ENCODE measurements at regions of chr6 and their contacts with region 1.

Region 1: GRCh38 chr6:111873178-111874024 is at the start of gene FYN:
- DNase-seq: peak; percentile 98
- ATAC-seq: peak; percentile 94
- H3K4me3 ChIP-seq: peak within 1 kb of the TSS; percentile 61 to 89 (median 81)
- H3K4me3 Mint-ChIP-seq: peak within 1 kb of the TSS; percentile 99
- H3K27ac ChIP-seq: peak within 1 kb of the TSS; percentile 66 to 76
- H3K27ac Mint-ChIP-seq: peak within 1 kb of the TSS; percentile 94
- H3K4me1 ChIP-seq: peaks cover 26 to 36% of the 10 kb centered on the region in 2 donors
- H3K4me1 Mint-ChIP-seq: peaks cover 38% of the 10 kb centered on the region
- H3K27me3 ChIP-seq: no peaks in the 10 kb centered on the region
- H3K27me3 Mint-ChIP-seq: no peaks in the 10 kb centered on the region
- CTCF ChIP-seq: no peak
- total RNA-seq, gene FYN: 92.4 and 94.0 TPM in 2 replicates

Region 2: GRCh38 chr6:111259089-111259831 is 614.1 kb before region 1 on chr6:
- CTCF ChIA-PET with region 1: no interaction called
- POLR2A ChIA-PET with region 1: no interaction called
- intact Hi-C with region 1: loop called (anchors 2 kb)
- DNase-seq: peak; percentile 100
- ATAC-seq: peak; percentile 96
- H3K4me3 ChIP-seq: peak overlapping the region; percentile 63 to 91 (median 82)
- H3K4me3 Mint-ChIP-seq: peak overlapping the region; percentile 87
- H3K27ac ChIP-seq: peak overlapping the region; percentile 95
- H3K27ac Mint-ChIP-seq: peak overlapping the region; percentile 98
- H3K4me1 ChIP-seq: peaks cover 17 to 26% of the 10 kb centered on the region in 2 donors
- H3K4me1 Mint-ChIP-seq: peaks cover 25% of the 10 kb centered on the region
- H3K27me3 ChIP-seq: no peaks in the 10 kb centered on the region
- H3K27me3 Mint-ChIP-seq: peaks cover under 1% of the 10 kb centered on the region
- CTCF ChIP-seq: peak; percentile 96

Region 3: DNA sequence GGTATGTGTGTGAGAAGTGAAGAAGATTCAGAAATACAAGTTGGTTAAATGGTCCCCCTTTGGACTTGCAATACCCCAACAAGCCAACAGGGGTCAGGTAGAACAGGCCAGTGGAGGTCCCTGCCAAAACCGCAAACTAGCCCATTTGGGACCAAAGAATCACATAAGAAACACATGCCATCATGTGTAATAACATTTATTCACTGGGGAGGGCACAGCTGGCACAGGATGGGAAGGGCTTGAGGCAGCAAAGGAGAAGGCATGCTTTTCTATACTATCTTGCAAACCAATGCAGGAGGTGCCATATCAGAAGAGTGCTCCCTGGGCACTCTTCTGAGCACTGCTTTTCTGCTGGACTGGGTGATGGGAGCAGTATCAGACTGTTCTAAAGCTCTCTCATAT is 151.6 kb before region 1 on chr6:
- CTCF ChIA-PET with region 1: interaction called, 8 read pairs
- POLR2A ChIA-PET with region 1: no interaction called
- intact Hi-C with region 1: loop called (anchors 1 kb)
- DNase-seq: peak; percentile 54
- ATAC-seq: no peak
- H3K4me3 ChIP-seq: no peak overlapping the region
- H3K4me3 Mint-ChIP-seq: no peak overlapping the region
- H3K27ac ChIP-seq: no peak overlapping the region
- H3K27ac Mint-ChIP-seq: no peak overlapping the region
- H3K4me1 ChIP-seq: peaks cover 37 to 40% of the 10 kb centered on the region in 2 donors
- H3K4me1 Mint-ChIP-seq: peaks cover 41% of the 10 kb centered on the region
- H3K27me3 ChIP-seq: no peaks in the 10 kb centered on the region
- H3K27me3 Mint-ChIP-seq: no peaks in the 10 kb centered on the region
- CTCF ChIP-seq: peak; percentile 70

Region 4: GRCh38 chr6:111804627-111805235 is 68.7 kb before region 1 on chr6:
- CTCF ChIA-PET with region 1: interaction called, 5 read pairs
- POLR2A ChIA-PET with region 1: interaction called, 4 read pairs
- intact Hi-C with region 1: loop called (anchors 1 kb)
- DNase-seq: peak; percentile 26
- ATAC-seq: peak; percentile 62
- H3K4me3 ChIP-seq: no peak overlapping the region
- H3K4me3 Mint-ChIP-seq: peak overlapping the region; percentile 48
- H3K27ac ChIP-seq: no peak overlapping the region
- H3K27ac Mint-ChIP-seq: peak overlapping the region; percentile 70
- H3K4me1 ChIP-seq: peaks cover 31 to 39% of the 10 kb centered on the region in 2 donors
- H3K4me1 Mint-ChIP-seq: peaks cover 46% of the 10 kb centered on the region
- H3K27me3 ChIP-seq: no peaks in the 10 kb centered on the region
- H3K27me3 Mint-ChIP-seq: no peaks in the 10 kb centered on the region
- CTCF ChIP-seq: no peak

Region 5: DNA sequence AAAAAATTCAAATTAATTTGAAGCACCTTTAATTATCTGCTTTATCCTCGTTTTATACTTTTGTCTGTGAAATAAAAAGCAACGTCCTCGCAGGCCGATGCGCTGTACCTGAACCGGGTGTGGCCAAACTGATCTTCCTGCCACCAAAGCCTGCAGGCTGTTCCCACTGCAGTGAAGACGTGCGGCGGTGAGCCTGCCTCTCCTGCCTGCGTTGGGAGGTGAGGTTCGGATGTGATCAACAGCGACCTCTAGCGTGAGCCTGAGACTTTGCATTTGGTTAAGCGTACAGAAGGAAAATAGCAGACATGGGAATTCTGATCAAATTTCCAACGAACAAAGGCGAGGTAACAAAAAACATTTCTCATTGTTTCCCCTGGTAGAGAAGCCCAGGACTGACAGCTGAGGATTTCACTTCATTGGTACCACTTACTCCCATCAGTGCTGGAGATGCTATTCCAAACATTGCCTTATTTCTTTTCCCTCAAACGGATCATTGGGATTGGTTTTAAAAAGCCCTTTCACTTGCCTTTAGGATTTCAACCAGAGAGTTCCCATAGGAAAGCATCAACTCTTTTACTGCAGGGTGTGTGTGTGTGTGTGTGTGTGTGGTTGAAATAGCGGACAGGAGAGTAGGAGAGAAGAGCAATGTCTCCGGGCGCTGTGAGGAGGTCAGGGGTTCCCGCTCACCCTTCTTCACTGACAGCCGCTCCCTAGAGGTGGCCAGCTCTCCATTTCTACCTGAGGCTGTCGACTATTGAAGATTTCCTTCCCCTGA is 123.9 kb after region 1 on chr6:
- CTCF ChIA-PET with region 1: interaction called, 3 read pairs
- POLR2A ChIA-PET with region 1: no interaction called
- intact Hi-C with region 1: loop called (anchors 1 kb)
- DNase-seq: peak; percentile 79
- ATAC-seq: peak; percentile 93
- H3K4me3 ChIP-seq: no peak overlapping the region
- H3K4me3 Mint-ChIP-seq: peak overlapping the region; percentile 30
- H3K27ac ChIP-seq: no peak overlapping the region
- H3K27ac Mint-ChIP-seq: no peak overlapping the region
- H3K4me1 ChIP-seq: peaks cover 4 to 6% of the 10 kb centered on the region in 2 donors
- H3K4me1 Mint-ChIP-seq: peaks cover 9% of the 10 kb centered on the region
- H3K27me3 ChIP-seq: peaks cover 0 to 11% (median 3%) of the 10 kb centered on the region in 4 experiments
- H3K27me3 Mint-ChIP-seq: peaks cover 21% of the 10 kb centered on the region
- CTCF ChIP-seq: peak; percentile 94

Region 6: GRCh38 chr6:112018619-112019416 is 145.4 kb after region 1 on chr6:
- CTCF ChIA-PET with region 1: no interaction called
- POLR2A ChIA-PET with region 1: no interaction called
- intact Hi-C with region 1: no loop called
- DNase-seq: no peak
- ATAC-seq: no peak
- H3K4me3 ChIP-seq: no peak overlapping the region
- H3K4me3 Mint-ChIP-seq: no peak overlapping the region
- H3K27ac ChIP-seq: no peak overlapping the region
- H3K27ac Mint-ChIP-seq: no peak overlapping the region
- H3K4me1 ChIP-seq: no peaks in the 10 kb centered on the region
- H3K4me1 Mint-ChIP-seq: no peaks in the 10 kb centered on the region
- H3K27me3 ChIP-seq: no peaks in the 10 kb centered on the region
- H3K27me3 Mint-ChIP-seq: no peaks in the 10 kb centered on the region
- CTCF ChIP-seq: no peak